ENCODE measurements at regions of chr16 and their contacts with region 1.

Region 1: DNA sequence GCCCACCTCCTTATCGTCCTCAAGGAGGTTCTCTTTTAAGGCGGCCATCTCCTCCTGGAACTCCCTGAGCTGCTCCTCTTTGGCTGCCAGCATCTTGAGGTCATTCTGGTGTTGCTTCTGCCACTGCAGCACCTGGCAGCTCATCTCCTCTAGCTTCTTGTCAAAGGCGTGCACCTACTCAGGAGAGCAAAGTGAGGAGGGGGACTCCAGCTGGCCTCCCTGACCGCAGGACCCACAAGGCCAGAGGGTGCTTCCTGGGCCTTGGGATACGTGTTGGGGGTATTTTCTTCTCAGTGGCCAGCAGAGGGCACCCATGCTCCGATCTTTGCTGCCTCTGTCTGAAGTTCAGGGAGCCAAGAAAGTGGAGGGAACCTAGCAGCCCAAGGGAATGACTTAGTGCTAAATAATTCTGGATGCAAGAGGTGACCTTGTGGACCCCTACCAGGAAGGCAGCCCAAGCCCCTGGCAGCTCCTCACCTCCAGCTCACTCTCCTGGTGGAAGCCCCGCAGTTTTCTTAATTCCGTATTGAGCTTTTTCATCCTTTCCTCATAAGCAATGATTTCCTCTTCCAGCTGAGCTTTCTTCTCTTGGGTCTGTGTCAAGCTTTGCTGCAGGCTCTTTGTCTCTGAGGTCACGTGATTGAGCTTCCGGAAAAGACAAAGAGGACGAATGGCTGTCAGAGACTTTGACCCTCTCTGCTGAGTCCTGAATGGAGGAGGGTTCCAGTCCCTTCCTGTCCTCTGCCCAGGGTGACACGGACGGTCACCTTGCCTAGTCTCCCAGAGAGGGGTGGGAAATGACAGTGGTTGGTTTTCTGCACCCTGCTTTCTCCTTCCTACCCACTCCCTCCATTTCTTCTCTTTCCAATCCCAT is 31.4 kb downstream of the DHX38 start:
- DNase-seq: peak; percentile 69 to 74
- ATAC-seq: peak; percentile 55 to 92 (median 81)
- H3K4me3 ChIP-seq: no peak overlapping the region
- H3K27ac ChIP-seq: peak overlapping the region in 3 of 10 donors; percentile 10 to 67 (median 36)
- H3K4me1 ChIP-seq: peaks cover 0 to 26% (median 0%) of the 10 kb centered on the region in 9 donors
- H3K27me3 ChIP-seq: peaks cover 0 to 11% (median 0%) of the 10 kb centered on the region in 7 donors
- CTCF ChIP-seq: peak; percentile 33 to 82 (median 76)

Region 2: GRCh38 chr16:71794943-71795342 is 330.1 kb before region 1 on chr16:
- intact Hi-C with region 1: no loop called
- DNase-seq: no peak
- ATAC-seq: peak in 2 of 8 donors; percentile 53 to 71
- H3K4me3 ChIP-seq: no peak overlapping the region
- H3K27ac ChIP-seq: no peak overlapping the region
- H3K4me1 ChIP-seq: peaks cover 0 to 67% (median 34%) of the 10 kb centered on the region in 9 donors
- H3K27me3 ChIP-seq: no peaks in the 10 kb centered on the region
- CTCF ChIP-seq: no peak

Region 3: DNA sequence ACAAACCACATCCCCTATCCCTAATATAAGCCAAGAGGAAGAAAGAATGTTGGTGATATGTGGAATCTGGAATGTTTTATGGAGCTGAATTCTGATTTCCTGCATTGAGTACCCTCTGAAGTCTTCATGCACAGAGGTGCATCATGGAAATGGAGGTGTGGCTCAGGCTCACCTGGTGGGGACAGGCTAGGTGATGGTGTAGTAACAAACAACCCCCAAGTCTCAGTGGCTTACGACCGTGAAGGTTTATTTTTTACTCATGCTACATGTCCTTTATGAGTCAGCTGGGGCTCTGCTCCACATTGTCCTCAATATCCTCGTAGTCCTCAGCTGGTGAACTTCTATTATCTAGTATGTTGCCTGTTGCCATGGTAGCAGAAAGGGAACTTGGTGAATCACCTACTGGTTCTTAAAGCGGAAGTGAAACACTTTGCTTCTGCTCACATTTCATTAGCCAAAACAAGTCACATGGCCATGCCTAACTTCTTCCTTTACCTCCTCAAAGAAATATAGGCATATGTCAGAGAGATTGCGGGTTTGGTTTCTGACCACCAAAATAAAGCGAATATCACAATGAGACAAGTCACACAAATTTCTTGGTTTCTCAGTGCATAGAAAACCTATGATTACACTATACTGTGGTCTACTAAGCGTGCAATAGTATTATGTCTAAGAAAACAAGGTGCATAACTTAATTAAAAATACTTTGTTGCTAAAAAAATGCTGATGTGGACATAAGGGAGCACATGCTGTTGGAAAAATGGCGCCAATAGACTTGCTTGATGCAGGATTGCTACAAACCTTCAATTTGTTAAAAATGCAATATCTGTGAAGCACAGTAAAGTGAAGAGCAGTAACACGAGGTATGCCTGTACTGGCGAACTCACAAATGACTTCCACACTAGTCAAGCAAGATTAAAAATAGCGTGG is 47.4 kb after region 1 on chr16 and contains the start of gene PMFBP1:
- intact Hi-C with region 1: no loop called
- DNase-seq: peak in 1 of 2 donors; percentile 34
- ATAC-seq: peak in 7 of 8 donors; percentile 55 to 85 (median 73)
- H3K4me3 ChIP-seq: no peak within 1 kb of the TSS
- H3K27ac ChIP-seq: peak within 1 kb of the TSS in 1 of 10 donors; percentile 63
- H3K4me1 ChIP-seq: peaks cover 0 to 10% (median 0%) of the 10 kb centered on the region in 9 donors
- H3K27me3 ChIP-seq: peaks cover 0 to 4% (median 0%) of the 10 kb centered on the region in 7 donors
- CTCF ChIP-seq: no peak
- total RNA-seq, gene PMFBP1: 0.26 to 1.6 TPM in 2 of 10 donors, not detected in the others

Region 4: GRCh38 chr16:72189865-72190371 is 64.9 kb after region 1 on chr16:
- intact Hi-C with region 1: no loop called
- DNase-seq: no peak
- ATAC-seq: peak in 1 of 8 donors; percentile 53
- H3K4me3 ChIP-seq: no peak overlapping the region
- H3K27ac ChIP-seq: peak overlapping the region in 1 of 10 donors; percentile 54
- H3K4me1 ChIP-seq: peaks cover 0 to 14% (median 0%) of the 10 kb centered on the region in 9 donors
- H3K27me3 ChIP-seq: peaks cover 0 to 7% (median 0%) of the 10 kb centered on the region in 7 donors
- CTCF ChIP-seq: no peak

Region 5: DNA sequence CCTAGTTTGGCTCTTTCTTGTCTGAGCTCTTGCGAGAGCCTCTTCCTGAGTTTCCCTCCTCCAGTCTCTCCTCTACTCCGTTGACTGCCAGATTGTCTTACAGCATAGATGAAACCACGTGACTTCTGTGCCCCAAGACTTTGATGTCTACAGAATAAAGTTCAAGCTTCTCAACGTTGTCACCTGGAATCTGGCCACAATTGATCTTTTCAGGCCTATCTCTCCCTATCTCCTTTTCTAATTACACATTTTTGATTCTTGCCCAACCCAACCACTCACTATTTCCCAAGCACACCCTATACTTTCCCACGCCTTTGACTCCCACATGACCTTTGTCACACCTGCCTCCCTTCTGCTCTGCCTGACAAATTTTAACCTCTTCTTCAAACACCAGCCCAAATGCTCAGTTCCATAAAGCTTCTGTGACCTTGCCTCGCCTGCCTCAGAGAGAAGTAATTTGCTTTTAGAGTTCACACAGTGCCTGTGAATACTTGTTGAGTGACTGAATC is 99.3 kb after region 1 on chr16:
- intact Hi-C with region 1: no loop called
- DNase-seq: no peak
- ATAC-seq: no peak
- H3K4me3 ChIP-seq: no peak overlapping the region
- H3K27ac ChIP-seq: no peak overlapping the region
- H3K4me1 ChIP-seq: no peaks in the 10 kb centered on the region
- H3K27me3 ChIP-seq: peaks cover 0 to 5% (median 0%) of the 10 kb centered on the region in 7 donors
- CTCF ChIP-seq: no peak

Region 6: GRCh38 chr16:72467157-72467759 is 342.3 kb after region 1 on chr16:
- intact Hi-C with region 1: loop called in 5 of 10 experiments (anchors 5 to 10 kb)
- DNase-seq: no peak
- ATAC-seq: no peak
- H3K4me3 ChIP-seq: no peak overlapping the region
- H3K27ac ChIP-seq: no peak overlapping the region
- H3K4me1 ChIP-seq: no peaks in the 10 kb centered on the region
- H3K27me3 ChIP-seq: no peaks in the 10 kb centered on the region
- CTCF ChIP-seq: peak in 6 of 9 donors; percentile 35 to 57 (median 43)

Region 7: DNA sequence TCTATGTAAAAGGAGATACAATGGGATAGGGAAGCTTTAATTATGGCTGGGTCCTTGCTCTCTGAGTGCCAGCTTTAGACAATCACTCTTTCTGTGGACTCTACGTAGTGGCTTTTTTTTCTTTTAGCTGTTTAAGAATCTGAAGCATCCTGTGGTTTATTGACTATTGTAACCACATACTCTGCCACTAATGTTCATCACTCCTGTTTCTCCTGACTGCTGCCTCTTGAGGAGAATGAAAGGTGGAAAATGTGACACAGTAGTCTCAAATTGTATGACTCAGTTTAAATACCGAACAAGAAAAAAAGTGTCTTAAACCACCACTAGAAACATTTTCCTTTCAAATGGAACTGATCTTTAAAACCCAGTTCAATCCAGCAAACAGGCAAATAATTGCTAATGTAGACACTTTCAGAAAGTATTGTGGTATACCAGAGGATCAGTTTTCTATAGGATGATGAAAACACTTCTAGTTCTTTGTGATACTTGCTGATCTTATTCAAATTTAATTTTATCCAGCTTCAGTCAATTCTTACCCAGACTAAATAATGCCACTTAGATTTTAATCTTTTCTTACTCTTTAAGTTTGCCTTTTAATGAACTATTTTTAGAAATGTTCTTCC is 349.6 kb after region 1 on chr16:
- intact Hi-C with region 1: loop called in 5 of 10 experiments (anchors 5 to 10 kb)
- DNase-seq: no peak
- ATAC-seq: no peak
- H3K4me3 ChIP-seq: no peak overlapping the region
- H3K27ac ChIP-seq: no peak overlapping the region
- H3K4me1 ChIP-seq: no peaks in the 10 kb centered on the region
- H3K27me3 ChIP-seq: no peaks in the 10 kb centered on the region
- CTCF ChIP-seq: no peak

Region 8: GRCh38 chr16:73888840-73889490 is 1764.0 kb after region 1 on chr16:
- intact Hi-C with region 1: loop called in 1 of 10 experiments (anchors 10 kb)
- DNase-seq: peak in 1 of 2 donors; percentile 15
- ATAC-seq: peak in 7 of 8 donors; percentile 67 to 95 (median 84)
- H3K4me3 ChIP-seq: peak overlapping the region in 1 of 10 donors; percentile 41
- H3K27ac ChIP-seq: peak overlapping the region in 4 of 10 donors; percentile 18 to 48 (median 21)
- H3K4me1 ChIP-seq: peaks cover 0 to 15% (median 0%) of the 10 kb centered on the region in 9 donors
- H3K27me3 ChIP-seq: peaks cover 0 to 68% (median 53%) of the 10 kb centered on the region in 7 donors
- CTCF ChIP-seq: no peak

Region 9: DNA sequence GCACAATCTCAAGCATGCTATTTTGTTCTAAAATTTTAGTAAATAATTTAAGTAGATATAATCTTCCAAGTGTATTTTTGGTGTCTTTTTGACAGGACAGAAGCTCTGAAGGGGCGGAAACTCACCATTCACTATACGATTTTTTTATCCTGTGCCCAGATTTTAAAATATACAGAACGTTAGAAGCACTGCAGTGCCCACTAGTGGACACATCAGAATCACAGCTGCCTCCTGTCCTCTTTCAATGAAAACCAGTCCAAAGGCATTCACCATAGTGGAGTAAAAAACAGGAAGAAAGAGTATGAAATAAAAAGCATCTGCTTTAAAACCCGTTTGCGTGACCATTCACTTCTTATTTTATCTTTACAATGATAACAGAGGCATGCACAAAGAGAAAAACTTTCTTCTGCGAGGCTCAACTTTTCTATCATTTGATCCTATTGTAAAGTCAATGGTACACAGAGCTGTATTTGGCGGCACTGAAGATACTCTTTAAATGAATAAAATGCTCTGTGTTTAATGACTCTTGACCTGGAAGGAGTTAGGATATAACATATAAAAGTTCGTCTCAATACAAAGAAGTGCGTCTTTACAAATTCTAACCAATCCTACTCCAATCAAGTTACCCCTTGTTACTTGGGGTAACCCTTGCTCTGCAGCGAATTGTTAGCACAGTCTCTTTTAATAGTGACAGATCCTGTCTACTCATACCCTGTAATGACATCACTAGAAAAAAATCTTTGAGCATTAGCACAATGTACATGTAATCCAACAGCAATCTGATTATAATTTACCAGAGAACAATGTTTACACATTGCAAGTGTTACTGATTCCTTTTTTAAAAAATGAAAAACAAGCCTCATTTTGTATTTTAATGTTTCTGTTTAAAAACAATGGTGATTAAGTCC is 1831.8 kb after region 1 on chr16:
- intact Hi-C with region 1: loop called in 1 of 10 experiments (anchors 5 kb)
- DNase-seq: peak; percentile 21 to 56
- ATAC-seq: peak in 3 of 8 donors; percentile 44 to 61 (median 54)
- H3K4me3 ChIP-seq: no peak overlapping the region
- H3K27ac ChIP-seq: no peak overlapping the region
- H3K4me1 ChIP-seq: peaks cover 0 to 5% (median 0%) of the 10 kb centered on the region in 9 donors
- H3K27me3 ChIP-seq: peaks cover 0 to 12% (median 0%) of the 10 kb centered on the region in 7 donors
- CTCF ChIP-seq: peak; percentile 58 to 88 (median 82)

Measured in heart right ventricle (tissue), 16 donors.